ENCODE measurements at regions of chr1 and their contacts with region 1.

Region 1: DNA sequence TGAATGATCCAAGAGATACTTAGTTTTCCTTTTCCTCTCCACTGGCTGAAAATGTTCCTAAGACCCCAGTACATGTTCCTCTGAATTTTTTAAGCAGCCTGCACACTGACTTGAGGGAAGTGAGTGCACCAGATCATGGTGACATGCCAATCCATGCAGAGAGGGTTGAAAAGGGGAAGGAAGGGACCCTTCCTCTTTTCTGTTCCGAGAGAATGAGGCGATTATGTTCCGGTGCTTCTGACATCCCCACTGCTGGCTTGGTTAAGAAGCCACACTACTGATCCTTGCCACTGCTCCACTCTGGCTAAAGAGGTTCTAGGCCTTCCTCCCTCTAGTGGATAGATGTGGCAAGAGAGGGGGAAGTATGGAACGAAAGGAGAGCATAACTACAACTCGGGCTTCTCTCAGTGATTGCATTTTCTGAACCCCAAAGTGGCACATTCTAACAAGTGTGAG is 1.8 kb upstream of the CYB5R1 start:
- DNase-seq: peak; percentile 85
- H3K4me3 Mint-ChIP-seq: no peak overlapping the region
- H3K27ac Mint-ChIP-seq: no peak overlapping the region
- H3K4me1 Mint-ChIP-seq: peaks cover 29% of the 10 kb centered on the region
- H3K27me3 Mint-ChIP-seq: peaks cover 3% of the 10 kb centered on the region
- CTCF ChIP-seq: peak; percentile 79

Region 2: DNA sequence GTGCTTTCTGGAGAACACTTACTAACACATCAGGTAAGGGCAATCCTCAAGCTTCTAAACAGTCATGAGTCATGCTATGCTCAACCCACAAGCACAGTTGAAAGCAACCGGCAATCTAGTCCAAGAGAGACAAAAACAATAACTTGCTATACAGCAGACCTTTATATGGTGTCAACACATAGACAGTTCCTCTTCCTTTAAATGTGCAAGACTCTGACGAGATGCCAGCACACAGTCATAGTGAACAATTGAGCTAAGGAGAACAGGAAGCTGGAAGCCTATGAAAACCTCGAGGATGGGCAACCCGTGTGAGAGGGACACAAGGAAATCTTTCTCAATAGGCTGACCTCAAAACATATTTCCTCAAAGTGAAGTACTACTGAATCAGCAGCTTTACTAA is 16.1 kb before region 1 on chr1:
- CTCF ChIA-PET with region 1: interaction called, 5 read pairs
- POLR2A ChIA-PET with region 1: interaction called, 88 read pairs
- intact Hi-C with region 1: no loop called
- DNase-seq: peak; percentile 93
- H3K4me3 Mint-ChIP-seq: peak overlapping the region; percentile 48
- H3K27ac Mint-ChIP-seq: peak overlapping the region; percentile 65
- H3K4me1 Mint-ChIP-seq: peaks cover 55% of the 10 kb centered on the region
- H3K27me3 Mint-ChIP-seq: no peaks in the 10 kb centered on the region
- CTCF ChIP-seq: no peak

Region 3: DNA sequence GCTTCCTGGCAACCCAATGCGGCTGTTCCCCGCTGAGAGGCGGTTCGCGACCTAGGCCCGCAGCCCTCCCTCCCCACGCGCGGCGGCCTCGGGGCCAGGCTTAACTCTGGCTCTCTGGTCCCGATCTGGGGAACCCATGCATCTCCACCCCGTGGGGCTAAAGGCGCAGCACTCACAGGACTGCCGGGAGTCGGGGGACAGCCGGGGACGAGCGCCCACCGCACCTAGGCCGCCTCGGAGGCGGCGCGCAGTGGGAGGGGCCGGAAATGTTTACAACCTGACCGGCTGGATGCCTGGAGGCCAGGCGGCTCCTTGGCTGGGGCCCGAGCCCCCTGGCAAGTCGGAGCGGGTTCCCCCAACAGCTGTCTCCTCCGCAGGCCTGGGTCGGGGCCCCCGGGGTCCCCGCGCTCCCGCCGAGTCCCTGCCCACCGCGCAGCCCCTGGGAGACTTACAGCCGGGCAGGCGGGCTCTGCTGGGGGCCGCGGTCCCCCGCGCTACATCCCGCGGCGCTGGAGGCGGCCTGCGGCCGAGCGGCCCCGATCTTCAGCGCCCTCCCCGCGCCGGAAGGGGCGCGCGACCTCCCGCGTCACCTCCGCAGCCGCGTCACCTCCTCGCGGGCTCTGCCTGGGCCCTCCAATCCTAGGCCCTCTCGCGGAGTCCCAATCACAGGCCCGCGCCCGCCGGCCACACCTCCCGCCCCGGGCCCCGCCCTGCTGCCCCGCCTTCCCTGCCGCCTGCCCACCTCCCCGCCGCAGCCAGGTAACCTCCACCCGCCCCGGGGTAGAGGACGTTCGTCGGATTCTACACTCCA is 10.9 kb before region 1 on chr1 and contains the start of gene ADIPOR1:
- CTCF ChIA-PET with region 1: interaction called, 5 read pairs
- POLR2A ChIA-PET with region 1: interaction called, 88 read pairs
- intact Hi-C with region 1: no loop called
- DNase-seq: peak; percentile 96
- H3K4me3 Mint-ChIP-seq: peak within 1 kb of the TSS; percentile 75
- H3K27ac Mint-ChIP-seq: peak within 1 kb of the TSS; percentile 65
- H3K4me1 Mint-ChIP-seq: peaks cover 60% of the 10 kb centered on the region
- H3K27me3 Mint-ChIP-seq: no peaks in the 10 kb centered on the region
- CTCF ChIP-seq: peak; percentile 19
- total RNA-seq, gene ADIPOR1: 157 and 168 TPM in 2 replicates

Region 4: GRCh38 chr1:203304919-203305808 is 336.3 kb after region 1 on chr1 and contains the start of gene BTG2:
- CTCF ChIA-PET with region 1: no interaction called
- POLR2A ChIA-PET with region 1: no interaction called
- intact Hi-C with region 1: no loop called
- DNase-seq: peak; percentile 96
- H3K4me3 Mint-ChIP-seq: peak within 1 kb of the TSS; percentile 71
- H3K27ac Mint-ChIP-seq: peak within 1 kb of the TSS; percentile 6
- H3K4me1 Mint-ChIP-seq: peaks cover 48% of the 10 kb centered on the region
- H3K27me3 Mint-ChIP-seq: no peaks in the 10 kb centered on the region
- CTCF ChIP-seq: no peak
- total RNA-seq, gene BTG2: 39.8 and 44.4 TPM in 2 replicates